CD4-positive, alpha-beta memory T cell (primary cell): ENCODE measurements at regions of chr10 and their contacts with region 1.

Region 1: DNA sequence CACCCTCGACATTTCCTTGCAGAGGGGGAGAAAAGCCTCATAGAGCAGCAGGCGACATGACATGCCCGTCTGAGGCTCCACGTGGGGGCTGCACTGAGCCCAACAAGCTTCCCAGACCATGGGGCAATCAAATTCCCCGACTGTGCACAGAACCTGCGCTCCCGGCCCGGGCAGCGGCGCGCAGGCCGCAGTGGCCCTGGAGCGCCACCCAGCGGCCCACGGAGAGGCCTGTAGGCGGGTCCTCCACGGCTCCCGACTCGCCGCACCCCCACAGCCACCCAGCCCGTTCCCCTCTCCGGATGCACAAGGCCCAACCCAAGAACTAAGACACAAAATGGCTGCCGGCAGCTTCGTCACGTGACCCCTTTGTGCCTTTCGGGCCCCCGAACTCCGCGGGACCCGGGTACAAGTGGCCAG is 816 bp downstream of the EPC1 start:
- DNase-seq: peak; percentile 97 to 98 (median 98)
- H3K4me3 ChIP-seq: peak overlapping the region; percentile 82 to 100
- H3K4me3 Mint-ChIP-seq: peak overlapping the region; percentile 90 to 98 (median 94)
- H3K27ac ChIP-seq: peak overlapping the region; percentile 100
- H3K27ac Mint-ChIP-seq: peak overlapping the region; percentile 99 to 100 (median 99)
- H3K4me1 ChIP-seq: peaks cover 78% of the 10 kb centered on the region
- H3K4me1 Mint-ChIP-seq: peaks cover 48 to 86% (median 65%) of the 10 kb centered on the region in 4 donors
- H3K27me3 ChIP-seq: no peaks in the 10 kb centered on the region
- H3K27me3 Mint-ChIP-seq: no peaks in the 10 kb centered on the region

Region 2: GRCh38 chr10:31318854-31319601 is 1027.1 kb before region 1 on chr10 and contains the start of gene ZEB1:
- CTCF ChIA-PET with region 1: no interaction called
- POLR2A ChIA-PET with region 1: no interaction called
- intact Hi-C with region 1: loop called (anchors 10 kb)
- DNase-seq: peak; percentile 91 to 97 (median 92)
- H3K4me3 ChIP-seq: peak within 1 kb of the TSS; percentile 55 to 74
- H3K4me3 Mint-ChIP-seq: peak within 1 kb of the TSS; percentile 97 to 100 (median 99)
- H3K27ac ChIP-seq: peak within 1 kb of the TSS; percentile 88
- H3K27ac Mint-ChIP-seq: peak within 1 kb of the TSS; percentile 94 to 100 (median 99)
- H3K4me1 ChIP-seq: peaks cover 30% of the 10 kb centered on the region
- H3K4me1 Mint-ChIP-seq: peaks cover 24 to 53% (median 38%) of the 10 kb centered on the region in 4 donors
- H3K27me3 ChIP-seq: no peaks in the 10 kb centered on the region
- H3K27me3 Mint-ChIP-seq: no peaks in the 10 kb centered on the region
- total RNA-seq, gene ZEB1: 68.7 to 70.6 TPM

Region 3: GRCh38 chr10:32149252-32149955 is 196.7 kb before region 1 on chr10:
- CTCF ChIA-PET with region 1: no interaction called
- POLR2A ChIA-PET with region 1: no interaction called
- intact Hi-C with region 1: no loop called
- DNase-seq: no peak
- H3K4me3 ChIP-seq: no peak overlapping the region
- H3K4me3 Mint-ChIP-seq: peak overlapping the region in 2 of 8 donors; percentile 3 to 39
- H3K27ac ChIP-seq: no peak overlapping the region
- H3K27ac Mint-ChIP-seq: peak overlapping the region in 3 of 7 donors; percentile 3 to 31 (median 22)
- H3K4me1 ChIP-seq: peaks cover 27% of the 10 kb centered on the region
- H3K4me1 Mint-ChIP-seq: peaks cover 16 to 40% (median 22%) of the 10 kb centered on the region in 4 donors
- H3K27me3 ChIP-seq: no peaks in the 10 kb centered on the region
- H3K27me3 Mint-ChIP-seq: no peaks in the 10 kb centered on the region

Region 4: DNA sequence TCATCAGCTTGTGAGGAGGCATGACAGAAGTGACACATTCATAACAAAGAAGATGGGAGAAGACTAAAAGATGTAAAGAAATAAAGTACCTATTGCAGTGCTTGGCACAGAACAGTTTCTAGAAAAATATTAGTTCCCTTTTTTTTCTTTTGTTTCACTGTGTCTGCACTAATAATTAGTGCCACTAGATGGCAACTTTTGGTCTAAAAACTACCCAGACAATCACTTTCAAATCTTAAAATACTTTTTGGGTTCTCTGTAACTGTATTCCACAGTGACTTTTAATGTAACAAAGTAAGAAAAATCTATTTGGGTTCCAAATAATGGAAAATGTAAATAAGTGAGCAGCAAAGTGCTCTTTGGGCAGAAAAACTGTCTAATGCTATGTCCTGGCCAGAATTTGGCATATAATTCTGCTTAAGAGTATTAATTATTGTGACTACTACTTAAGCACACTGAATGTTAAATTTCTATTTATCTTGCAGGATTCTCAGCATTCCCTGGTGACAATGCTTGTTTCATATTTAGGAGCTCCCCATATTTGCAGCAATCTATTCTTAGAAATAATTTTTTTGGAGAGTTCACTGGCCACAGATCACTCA is 155.2 kb before region 1 on chr10:
- CTCF ChIA-PET with region 1: interaction called, 11 read pairs
- POLR2A ChIA-PET with region 1: no interaction called
- intact Hi-C with region 1: loop called (anchors 1 kb)
- DNase-seq: peak in 4 of 5 donors; percentile 31 to 44 (median 40)
- H3K4me3 ChIP-seq: no peak overlapping the region
- H3K4me3 Mint-ChIP-seq: no peak overlapping the region
- H3K27ac ChIP-seq: no peak overlapping the region
- H3K27ac Mint-ChIP-seq: peak overlapping the region in 4 of 7 donors; percentile 5 to 59 (median 50)
- H3K4me1 ChIP-seq: no peaks in the 10 kb centered on the region
- H3K4me1 Mint-ChIP-seq: peaks cover 0 to 6% (median 3%) of the 10 kb centered on the region in 4 donors
- H3K27me3 ChIP-seq: no peaks in the 10 kb centered on the region
- H3K27me3 Mint-ChIP-seq: no peaks in the 10 kb centered on the region

Region 5: GRCh38 chr10:32237644-32238345 is 108.3 kb before region 1 on chr10:
- CTCF ChIA-PET with region 1: no interaction called
- POLR2A ChIA-PET with region 1: no interaction called
- intact Hi-C with region 1: no loop called
- DNase-seq: no peak
- H3K4me3 ChIP-seq: no peak overlapping the region
- H3K4me3 Mint-ChIP-seq: no peak overlapping the region
- H3K27ac ChIP-seq: no peak overlapping the region
- H3K27ac Mint-ChIP-seq: peak overlapping the region in 1 of 7 donors; percentile 41
- H3K4me1 ChIP-seq: no peaks in the 10 kb centered on the region
- H3K4me1 Mint-ChIP-seq: no peaks in the 10 kb centered on the region
- H3K27me3 ChIP-seq: no peaks in the 10 kb centered on the region
- H3K27me3 Mint-ChIP-seq: no peaks in the 10 kb centered on the region

Region 6: GRCh38 chr10:32326119-32326518 is 20.0 kb before region 1 on chr10:
- CTCF ChIA-PET with region 1: interaction called, 4 read pairs
- POLR2A ChIA-PET with region 1: interaction called, 12 read pairs
- intact Hi-C with region 1: loop called (anchors 2 kb)
- DNase-seq: no peak
- H3K4me3 ChIP-seq: no peak overlapping the region
- H3K4me3 Mint-ChIP-seq: peak overlapping the region in 7 of 8 donors; percentile 8 to 71 (median 47)
- H3K27ac ChIP-seq: no peak overlapping the region
- H3K27ac Mint-ChIP-seq: peak overlapping the region in 6 of 7 donors; percentile 2 to 76 (median 8)
- H3K4me1 ChIP-seq: peaks cover 89% of the 10 kb centered on the region
- H3K4me1 Mint-ChIP-seq: peaks cover 67 to 95% (median 83%) of the 10 kb centered on the region in 4 donors
- H3K27me3 ChIP-seq: no peaks in the 10 kb centered on the region
- H3K27me3 Mint-ChIP-seq: no peaks in the 10 kb centered on the region

Region 7: GRCh38 chr10:32367793-32368453 is 21.8 kb after region 1 on chr10:
- CTCF ChIA-PET with region 1: interaction called, 42 read pairs
- POLR2A ChIA-PET with region 1: interaction called, 22 read pairs
- intact Hi-C with region 1: loop called (anchors 1 kb)
- DNase-seq: peak; percentile 72 to 77 (median 75)
- H3K4me3 ChIP-seq: no peak overlapping the region
- H3K4me3 Mint-ChIP-seq: peak overlapping the region in 7 of 8 donors; percentile 31 to 76 (median 70)
- H3K27ac ChIP-seq: peak overlapping the region; percentile 33
- H3K27ac Mint-ChIP-seq: peak overlapping the region; percentile 62 to 92 (median 84)
- H3K4me1 ChIP-seq: peaks cover 83% of the 10 kb centered on the region
- H3K4me1 Mint-ChIP-seq: peaks cover 47 to 84% (median 64%) of the 10 kb centered on the region in 4 donors
- H3K27me3 ChIP-seq: no peaks in the 10 kb centered on the region
- H3K27me3 Mint-ChIP-seq: no peaks in the 10 kb centered on the region

Region 8: DNA sequence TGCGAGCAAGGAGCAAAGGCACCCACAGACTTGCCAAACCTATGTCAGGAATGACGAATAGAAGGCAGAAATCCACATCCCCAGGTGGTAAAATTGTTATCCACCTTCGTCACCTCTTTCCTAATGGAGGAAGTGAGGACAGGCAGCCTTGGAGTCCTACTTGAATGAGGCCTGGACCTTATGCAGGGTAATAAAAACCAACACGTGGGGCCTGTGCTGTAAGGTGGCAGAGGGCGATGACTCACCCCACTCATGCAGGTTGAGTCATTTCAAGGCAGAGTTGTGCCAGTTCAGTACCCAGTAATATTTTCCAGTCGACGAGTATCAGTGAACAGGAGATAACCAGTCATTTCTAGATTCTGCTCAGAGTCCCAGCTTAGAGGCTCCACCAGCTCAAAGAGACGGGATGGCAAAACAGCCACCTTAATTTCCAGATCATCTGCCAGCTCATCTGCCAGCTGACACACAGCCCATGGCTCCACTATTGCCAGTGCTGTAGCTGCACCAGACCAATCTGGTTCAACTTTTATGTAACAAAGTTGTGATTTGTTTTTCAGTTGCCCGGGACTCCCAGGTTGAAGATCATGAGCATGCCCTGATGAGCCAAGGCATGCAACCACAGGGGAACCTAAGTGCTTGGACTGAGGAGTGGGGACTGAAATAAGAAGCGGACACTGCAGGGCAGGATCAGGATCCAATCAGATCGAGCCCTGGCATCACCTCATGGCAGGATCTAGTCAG is 788.0 kb after region 1 on chr10:
- CTCF ChIA-PET with region 1: no interaction called
- POLR2A ChIA-PET with region 1: interaction called, 3 read pairs
- intact Hi-C with region 1: loop called (anchors 5 kb)
- DNase-seq: peak; percentile 59 to 96 (median 73)
- H3K4me3 ChIP-seq: no peak overlapping the region
- H3K4me3 Mint-ChIP-seq: peak overlapping the region; percentile 13 to 84 (median 62)
- H3K27ac ChIP-seq: peak overlapping the region; percentile 84
- H3K27ac Mint-ChIP-seq: peak overlapping the region; percentile 89 to 100 (median 100)
- H3K4me1 ChIP-seq: peaks cover 98% of the 10 kb centered on the region
- H3K4me1 Mint-ChIP-seq: peaks cover 71 to 97% (median 85%) of the 10 kb centered on the region in 4 donors
- H3K27me3 ChIP-seq: no peaks in the 10 kb centered on the region
- H3K27me3 Mint-ChIP-seq: no peaks in the 10 kb centered on the region